Transverse colon (tissue), 4 donors: ENCODE measurements at regions of chrX and their contacts with region 1.

Region 1: DNA sequence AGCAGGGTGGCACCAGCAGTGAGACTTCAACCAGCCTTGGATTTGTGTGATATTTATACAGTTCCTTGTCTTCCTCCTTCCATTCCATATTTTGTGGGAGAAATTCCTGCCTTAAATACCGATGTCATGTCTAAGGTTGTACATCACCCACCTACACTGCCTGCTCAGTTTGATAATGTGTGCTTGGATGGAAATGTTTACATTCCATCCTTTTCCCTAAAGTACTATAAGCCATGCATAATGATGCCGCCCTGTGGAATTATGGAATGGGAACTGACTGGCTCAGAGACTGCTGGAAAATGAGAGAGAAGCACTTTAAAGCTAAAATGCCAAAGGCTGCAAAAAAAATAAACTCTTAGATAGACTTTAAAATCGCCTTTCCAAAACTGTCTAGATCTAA is 11.3 kb upstream of the GLUD2 start:
- DNase-seq: no peak
- H3K4me3 ChIP-seq: no peak overlapping the region
- H3K27ac ChIP-seq: no peak overlapping the region
- H3K4me1 ChIP-seq: no peaks in the 10 kb centered on the region
- H3K27me3 ChIP-seq: no peaks in the 10 kb centered on the region
- CTCF ChIP-seq: no peak
- EP300 ChIP-seq: no peak
- POLR2A ChIP-seq: no peak

Region 2: GRCh38 chrX:121064579-121064978 is 28.4 kb after region 1 on chrX:
- in situ Hi-C with region 1: no loop called
- intact Hi-C with region 1: loop called (anchors 1 kb)
- DNase-seq: no peak
- H3K4me3 ChIP-seq: no peak overlapping the region
- H3K27ac ChIP-seq: no peak overlapping the region
- H3K4me1 ChIP-seq: no peaks in the 10 kb centered on the region
- H3K27me3 ChIP-seq: no peaks in the 10 kb centered on the region
- CTCF ChIP-seq: no peak
- EP300 ChIP-seq: no peak
- POLR2A ChIP-seq: no peak

Region 3: GRCh38 chrX:121349263-121349662 is 313.1 kb after region 1 on chrX:
- in situ Hi-C with region 1: no loop called
- intact Hi-C with region 1: no loop called
- DNase-seq: no peak
- H3K4me3 ChIP-seq: no peak overlapping the region
- H3K27ac ChIP-seq: no peak overlapping the region
- H3K4me1 ChIP-seq: no peaks in the 10 kb centered on the region
- H3K27me3 ChIP-seq: no peaks in the 10 kb centered on the region
- CTCF ChIP-seq: no peak
- EP300 ChIP-seq: no peak
- POLR2A ChIP-seq: no peak